Tibial artery (tissue), 4 donors: ENCODE measurements at regions of chr3 and their contacts with region 1.

Region 1: GRCh38 chr3:42012935-42013690 is 51.2 kb upstream of the ULK4 start:
- DNase-seq: peak; percentile 53 to 81
- H3K4me3 ChIP-seq: peak overlapping the region; percentile 73 to 88
- H3K27ac ChIP-seq: peak overlapping the region; percentile 74 to 82
- H3K4me1 ChIP-seq: peaks cover 0 to 33% (median 16%) of the 10 kb centered on the region in 4 donors
- H3K27me3 ChIP-seq: no peaks in the 10 kb centered on the region
- CTCF ChIP-seq: no peak

Region 2: GRCh38 chr3:41961750-41962679 is 51.1 kb before region 1 on chr3 and contains the start of gene ULK4:
- intact Hi-C with region 1: loop called (anchors 5 kb)
- DNase-seq: peak; percentile 97 to 99
- H3K4me3 ChIP-seq: peak within 1 kb of the TSS; percentile 82 to 91
- H3K27ac ChIP-seq: peak within 1 kb of the TSS; percentile 77 to 83
- H3K4me1 ChIP-seq: peaks cover 0 to 11% (median 3%) of the 10 kb centered on the region in 4 donors
- H3K27me3 ChIP-seq: no peaks in the 10 kb centered on the region
- CTCF ChIP-seq: peak in 1 of 2 experiments; percentile 26